ENCODE measurements at regions of chr7 and their contacts with region 1.

Region 1: DNA sequence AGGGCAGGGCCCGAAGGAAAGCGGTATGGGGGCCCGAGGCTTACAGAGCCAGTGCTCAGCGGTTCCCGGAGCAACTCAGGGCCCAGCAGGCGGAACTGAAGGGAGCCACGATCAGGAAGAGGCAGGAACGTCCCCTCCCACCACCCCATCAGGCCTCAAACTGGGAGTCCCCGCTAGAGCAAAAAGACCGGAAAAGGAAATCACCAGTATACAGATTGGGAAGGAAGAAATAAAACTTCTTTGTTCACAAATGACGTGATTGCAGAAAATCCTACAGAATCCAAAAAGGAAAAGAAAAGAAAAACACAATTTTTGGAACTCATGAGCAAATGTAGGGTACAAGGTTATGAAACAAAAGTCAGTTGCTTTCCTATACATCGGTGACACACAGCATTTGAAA is 21.6 kb upstream of the ZFAND2A start:
- DNase-seq: no peak
- H3K4me3 Mint-ChIP-seq: no peak overlapping the region
- H3K27ac Mint-ChIP-seq: no peak overlapping the region
- H3K4me1 Mint-ChIP-seq: peaks cover 11% of the 10 kb centered on the region
- H3K27me3 Mint-ChIP-seq: peaks cover 12% of the 10 kb centered on the region

Region 2: GRCh38 chr7:1193593-1194424 is 12.2 kb after region 1 on chr7:
- CTCF ChIA-PET with region 1: interaction called, 55 read pairs
- POLR2A ChIA-PET with region 1: interaction called, 10 read pairs
- DNase-seq: peak; percentile 70
- H3K4me3 Mint-ChIP-seq: no peak overlapping the region
- H3K27ac Mint-ChIP-seq: peak overlapping the region; percentile 38
- H3K4me1 Mint-ChIP-seq: peaks cover 30% of the 10 kb centered on the region
- H3K27me3 Mint-ChIP-seq: peaks cover 11% of the 10 kb centered on the region